ENCODE measurements at regions of chr5 and their contacts with region 1.

Region 1: DNA sequence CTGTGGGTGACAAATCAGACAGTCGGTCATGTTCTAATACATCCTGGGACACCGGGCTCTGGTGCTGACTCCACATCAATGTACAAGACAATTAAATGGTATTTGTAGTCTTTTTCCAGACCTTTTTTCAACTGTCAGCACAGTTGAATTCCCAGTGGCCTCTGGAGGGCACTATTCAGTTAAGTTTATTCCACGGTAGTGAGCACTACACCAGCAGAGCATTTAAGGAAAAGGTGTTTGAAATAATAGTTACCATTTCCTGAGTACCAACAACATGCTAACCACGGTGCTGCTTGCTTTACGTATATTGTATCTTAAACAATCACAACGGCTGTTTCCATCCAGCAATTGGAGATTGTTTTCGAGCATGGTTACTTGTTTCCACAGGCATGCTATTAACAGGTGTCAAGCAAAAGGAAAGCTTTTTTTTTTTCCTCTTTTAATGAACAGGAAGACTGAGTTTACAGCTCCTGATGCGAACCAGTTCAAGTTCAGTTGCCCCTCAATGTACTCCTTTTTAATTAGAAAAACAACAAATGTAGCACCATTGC is 186.7 kb downstream of the PDZD2 start:
- DNase-seq: no peak
- H3K4me3 ChIP-seq: no peak overlapping the region
- H3K27ac ChIP-seq: no peak overlapping the region
- H3K4me1 ChIP-seq: no peaks in the 10 kb centered on the region
- H3K27me3 ChIP-seq: no peaks in the 10 kb centered on the region
- CTCF ChIP-seq: peak; percentile 40 to 66 (median 50)

Region 2: DNA sequence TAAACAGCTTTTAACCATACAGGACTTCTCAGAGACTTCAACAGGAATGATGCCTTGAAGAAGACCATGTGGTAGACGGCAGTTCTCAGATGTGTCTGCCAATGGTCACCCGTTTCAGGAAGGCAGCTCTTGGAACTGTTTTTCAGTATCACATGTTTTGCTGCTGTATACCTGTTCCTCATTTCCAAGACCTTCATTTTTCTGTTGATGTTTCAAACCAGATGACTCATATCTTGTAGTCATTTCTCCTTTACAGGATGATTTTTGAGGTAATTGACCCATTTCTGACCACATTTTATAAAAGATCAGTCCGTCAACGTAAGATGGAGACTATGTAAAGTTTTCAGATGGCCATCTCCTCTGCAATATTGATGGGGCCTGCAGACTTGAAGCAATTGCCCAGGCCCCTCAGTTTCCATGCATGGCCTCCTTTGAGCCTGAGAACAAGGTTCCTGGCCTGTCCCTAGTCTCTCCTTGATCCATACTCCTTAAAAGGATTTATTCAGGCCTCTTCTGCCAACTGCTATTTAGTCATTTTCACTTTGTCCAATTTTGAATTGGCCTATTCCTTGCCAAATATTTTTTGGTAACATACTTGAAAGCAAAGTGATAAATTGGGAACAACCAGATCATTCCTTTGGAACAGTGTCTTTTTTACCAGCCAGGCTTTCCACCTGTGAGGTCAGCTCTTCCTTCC is 58.1 kb before region 1 on chr5:
- intact Hi-C with region 1: no loop called
- DNase-seq: no peak
- H3K4me3 ChIP-seq: no peak overlapping the region
- H3K27ac ChIP-seq: no peak overlapping the region
- H3K4me1 ChIP-seq: peaks cover 0 to 5% of the 10 kb centered on the region in 2 donors
- H3K27me3 ChIP-seq: no peaks in the 10 kb centered on the region
- CTCF ChIP-seq: no peak

Region 3: GRCh38 chr5:32076699-32077695 is 251.4 kb after region 1 on chr5:
- intact Hi-C with region 1: loop called (anchors 1 kb)
- DNase-seq: no peak
- H3K4me3 ChIP-seq: no peak overlapping the region
- H3K27ac ChIP-seq: no peak overlapping the region
- H3K4me1 ChIP-seq: no peaks in the 10 kb centered on the region
- H3K27me3 ChIP-seq: no peaks in the 10 kb centered on the region
- CTCF ChIP-seq: peak; percentile 39 to 83 (median 58)

Region 4: DNA sequence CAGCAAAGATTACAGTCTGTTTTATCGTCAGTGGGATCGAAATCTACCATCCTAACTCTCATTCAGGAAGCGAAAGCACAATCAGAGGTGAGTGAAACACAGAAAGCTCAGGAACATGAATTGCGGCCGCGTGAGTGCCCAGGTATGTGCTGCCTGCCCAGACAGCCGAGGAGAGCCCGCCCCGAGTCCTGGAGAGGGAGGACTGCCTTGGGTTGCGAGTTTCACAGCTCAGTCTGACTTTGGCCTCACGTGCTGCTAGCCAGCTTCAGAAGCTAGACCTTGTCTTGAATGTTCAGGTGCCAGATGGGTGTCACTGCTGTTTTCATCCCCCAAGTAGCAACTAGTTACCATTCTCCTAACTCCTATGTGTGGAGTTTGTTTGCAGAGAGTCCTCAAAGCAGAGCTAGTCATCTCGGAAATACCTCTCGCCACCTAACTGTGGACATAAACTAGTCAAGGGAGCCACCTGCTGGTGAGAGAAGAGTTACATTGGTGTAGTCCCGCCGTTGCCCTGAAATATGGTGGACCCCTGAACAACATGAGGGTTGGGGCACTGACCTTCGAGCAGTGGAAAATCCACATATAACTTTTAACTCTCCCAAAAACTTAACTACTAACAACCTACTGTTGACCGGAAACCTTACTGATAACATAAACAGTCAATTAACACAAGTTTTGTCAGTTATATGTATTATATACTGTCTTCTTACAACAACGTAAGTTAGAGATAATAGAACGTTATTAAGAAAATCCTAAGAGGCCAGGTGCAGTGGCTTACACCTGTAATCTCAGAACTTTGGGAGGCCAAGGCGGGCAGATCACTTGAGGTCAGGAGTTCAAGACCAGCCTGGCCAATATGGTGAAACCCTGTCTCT is 267.6 kb after region 1 on chr5:
- intact Hi-C with region 1: loop called (anchors 1 kb)
- DNase-seq: peak in 1 of 2 donors; percentile 78
- H3K4me3 ChIP-seq: no peak overlapping the region
- H3K27ac ChIP-seq: no peak overlapping the region
- H3K4me1 ChIP-seq: peaks cover 0 to 7% of the 10 kb centered on the region in 2 donors
- H3K27me3 ChIP-seq: no peaks in the 10 kb centered on the region
- CTCF ChIP-seq: peak; percentile 65 to 71 (median 65)